Endothelial cell of umbilical vein (primary cell): ENCODE measurements at regions of chr5 and their contacts with region 1.

Region 1: DNA sequence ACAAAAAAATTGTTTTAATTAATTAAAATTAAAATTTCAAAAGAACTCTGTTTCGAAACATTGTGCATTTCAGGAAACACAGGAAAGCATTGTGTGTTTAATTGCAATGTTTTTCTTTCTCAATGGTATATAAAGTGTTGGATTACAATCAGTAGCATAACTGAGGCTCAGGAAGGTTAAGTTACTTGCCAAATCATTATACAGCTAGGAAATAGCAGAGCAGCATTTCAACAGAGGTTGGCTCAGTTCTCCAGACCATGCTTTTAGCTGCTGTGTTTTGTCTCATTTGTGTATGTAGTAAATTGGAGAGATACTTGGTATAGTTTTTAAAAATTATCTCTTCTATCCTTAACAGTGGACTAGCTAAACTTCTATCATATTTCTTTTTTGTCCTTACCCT is 30.0 kb upstream of the CAMLG start:
- DNase-seq: peak; percentile 7
- H3K4me3 ChIP-seq: no peak overlapping the region
- H3K27ac ChIP-seq: no peak overlapping the region
- H3K4me1 ChIP-seq: no peaks in the 10 kb centered on the region
- H3K27me3 ChIP-seq: no peaks in the 10 kb centered on the region
- CTCF ChIP-seq: no peak
- POLR2A ChIP-seq: no peak

Region 2: DNA sequence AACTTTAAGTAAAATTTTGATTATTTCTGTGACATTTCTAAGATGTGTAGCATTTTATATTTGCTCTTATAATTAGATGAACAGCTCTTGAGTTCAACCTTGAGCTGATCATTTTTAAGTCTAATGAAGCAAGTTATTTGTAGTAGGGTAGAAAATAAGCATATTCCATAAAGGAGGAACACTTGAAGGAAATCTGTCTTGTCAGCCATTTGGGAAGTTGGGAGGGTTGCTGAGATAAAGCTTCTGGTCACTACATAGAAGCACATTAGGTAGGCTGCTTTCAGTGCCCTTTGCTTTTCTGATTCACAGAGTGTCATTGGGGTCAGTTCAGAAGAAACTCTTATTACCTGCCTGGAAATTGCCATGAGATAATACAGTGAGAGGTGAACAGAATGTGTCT is 15.6 kb before region 1 on chr5:
- CTCF ChIA-PET with region 1: no interaction called
- POLR2A ChIA-PET with region 1: no interaction called
- dilution Hi-C with region 1: no loop called
- intact Hi-C with region 1: loop called (anchors 1 kb)
- DNase-seq: no peak
- H3K4me3 ChIP-seq: no peak overlapping the region
- H3K27ac ChIP-seq: no peak overlapping the region
- H3K4me1 ChIP-seq: no peaks in the 10 kb centered on the region
- H3K27me3 ChIP-seq: no peaks in the 10 kb centered on the region
- CTCF ChIP-seq: no peak
- POLR2A ChIP-seq: no peak